ENCODE measurements at regions of chr5 and their contacts with region 1.

Region 1: GRCh38 chr5:135560858-135561257 is 17.9 kb downstream of the CXCL14 start:
- DNase-seq: peak; percentile 82

Region 2: GRCh38 chr5:135230251-135230925 is 330.5 kb before region 1 on chr5:
- CTCF ChIA-PET with region 1: no interaction called
- POLR2A ChIA-PET with region 1: no interaction called
- DNase-seq: no peak

Region 3: DNA sequence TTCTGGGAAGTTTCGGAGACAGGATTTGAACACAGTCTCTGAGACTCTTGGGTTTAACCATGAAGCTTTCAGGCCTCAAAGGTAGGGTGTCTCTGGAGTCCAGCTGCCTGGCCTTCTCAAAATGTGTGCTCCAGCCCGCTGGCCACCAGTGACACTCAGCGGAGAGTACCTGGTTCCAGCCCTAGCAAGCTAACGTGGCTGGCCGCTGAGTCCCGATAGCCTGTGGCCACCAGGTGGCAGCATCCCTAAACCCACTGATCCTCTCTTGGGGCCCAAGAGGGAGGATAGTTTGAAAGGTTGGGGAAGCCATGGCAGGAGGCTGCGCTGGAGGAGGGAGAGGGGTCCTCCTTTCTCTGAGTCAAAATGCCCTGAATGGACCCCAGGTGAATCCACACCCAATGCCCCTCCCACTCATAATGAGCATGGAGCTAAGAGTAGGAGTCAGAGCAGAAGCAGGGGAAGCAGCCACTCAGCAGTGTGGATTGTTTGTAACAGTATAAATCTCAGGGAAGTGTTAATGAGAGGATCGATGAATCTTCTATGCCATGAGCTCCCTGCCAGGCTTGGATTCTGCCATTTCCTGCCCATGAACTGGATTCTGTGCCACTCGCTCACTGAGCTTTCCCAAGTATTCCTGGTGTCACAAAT is 103.3 kb before region 1 on chr5:
- CTCF ChIA-PET with region 1: interaction called, 450 read pairs
- POLR2A ChIA-PET with region 1: interaction called, 4 read pairs
- DNase-seq: peak; percentile 83

Region 4: GRCh38 chr5:135729321-135729786 is 168.5 kb after region 1 on chr5:
- CTCF ChIA-PET with region 1: interaction called, 19 read pairs
- POLR2A ChIA-PET with region 1: no interaction called
- DNase-seq: no peak

Region 5: DNA sequence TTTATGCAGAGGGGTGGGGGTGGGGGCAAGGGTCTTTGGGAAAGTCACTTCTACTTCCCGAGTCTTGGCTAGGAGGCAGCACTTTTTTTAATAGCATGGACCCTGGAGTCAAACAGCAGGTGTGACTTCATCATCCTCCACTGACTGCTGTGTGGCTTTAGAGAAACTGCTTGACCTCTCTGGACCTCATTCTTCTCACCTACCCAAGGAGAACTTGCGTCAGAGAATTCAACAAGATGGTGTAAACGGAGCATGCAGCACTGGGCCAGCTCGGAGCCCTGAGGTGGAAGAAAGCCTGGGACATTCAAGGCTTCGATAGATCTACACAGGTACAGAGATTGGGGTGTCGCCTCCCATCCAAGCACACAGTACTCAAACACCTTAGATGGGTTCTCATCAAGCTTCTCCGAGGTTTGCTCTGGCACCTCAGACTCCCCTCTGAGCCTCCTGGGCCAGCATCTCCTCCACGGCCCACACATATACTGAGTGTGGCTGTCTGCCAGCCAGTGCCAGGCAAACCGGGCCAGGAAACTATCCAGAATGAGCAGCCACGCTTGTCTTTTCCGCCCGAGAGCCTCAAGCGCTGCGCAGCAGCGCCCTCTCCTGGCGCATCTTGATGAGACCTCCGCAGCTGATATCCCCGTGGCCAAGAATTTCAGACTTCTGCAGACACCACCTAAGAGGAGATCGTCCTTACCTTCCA is 269.0 kb after region 1 on chr5:
- CTCF ChIA-PET with region 1: interaction called, 38 read pairs
- POLR2A ChIA-PET with region 1: no interaction called
- DNase-seq: peak; percentile 82

Measured in HEK293T (cell line).